Thyroid gland (tissue), 4 donors: ENCODE measurements at regions of chr3 and their contacts with region 1.

Region 1: DNA sequence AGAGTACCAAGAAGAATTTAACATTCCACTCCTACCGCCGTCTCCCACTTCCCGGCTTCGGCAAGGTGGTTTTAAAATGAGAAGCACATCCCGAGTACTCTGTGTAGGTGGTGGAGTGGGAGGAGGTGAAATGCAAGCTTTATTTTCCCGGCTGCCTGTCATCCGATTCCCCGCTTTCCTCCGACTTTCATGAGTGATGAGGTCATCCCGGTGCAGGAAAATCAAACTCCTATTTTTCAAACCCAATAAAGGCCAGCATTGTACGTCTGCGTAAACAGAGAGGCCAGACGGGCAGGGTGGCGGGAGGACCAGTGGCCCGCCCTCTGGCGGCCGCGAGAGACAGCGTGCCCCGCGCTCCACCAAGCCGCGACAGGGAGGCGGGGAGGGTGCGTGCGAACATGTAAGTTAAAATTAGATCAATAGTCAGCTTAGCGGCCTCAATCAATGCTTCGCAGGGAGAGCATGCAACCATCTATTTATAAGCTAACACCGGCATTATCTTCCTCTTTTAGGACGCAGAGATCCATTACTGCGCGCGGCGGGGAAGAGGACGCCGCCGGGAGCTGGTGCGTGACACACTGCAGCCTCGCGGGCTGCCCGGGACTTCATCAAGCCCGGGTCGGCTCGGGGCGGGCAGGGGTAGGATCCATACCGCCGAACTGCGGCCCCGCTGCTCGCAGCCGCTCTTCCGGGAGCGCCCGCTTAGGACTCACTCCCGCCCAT is 163.3 kb downstream of the CD47 start:
- DNase-seq: peak; percentile 72
- H3K4me3 ChIP-seq: peak overlapping the region in 2 of 3 donors; percentile 36 to 70
- H3K27ac ChIP-seq: no peak overlapping the region
- H3K4me1 ChIP-seq: peaks cover 0 to 10% of the 10 kb centered on the region in 2 donors
- H3K27me3 ChIP-seq: no peaks in the 10 kb centered on the region
- CTCF ChIP-seq: peak; percentile 66 to 90 (median 80)
- POLR2A ChIP-seq: no peak

Region 2: GRCh38 chr3:107627962-107628542 is 299.5 kb before region 1 on chr3:
- intact Hi-C with region 1: no loop called
- DNase-seq: no peak
- H3K4me3 ChIP-seq: no peak overlapping the region
- H3K27ac ChIP-seq: no peak overlapping the region
- H3K4me1 ChIP-seq: no peaks in the 10 kb centered on the region
- H3K27me3 ChIP-seq: no peaks in the 10 kb centered on the region
- CTCF ChIP-seq: no peak
- POLR2A ChIP-seq: no peak

Region 3: DNA sequence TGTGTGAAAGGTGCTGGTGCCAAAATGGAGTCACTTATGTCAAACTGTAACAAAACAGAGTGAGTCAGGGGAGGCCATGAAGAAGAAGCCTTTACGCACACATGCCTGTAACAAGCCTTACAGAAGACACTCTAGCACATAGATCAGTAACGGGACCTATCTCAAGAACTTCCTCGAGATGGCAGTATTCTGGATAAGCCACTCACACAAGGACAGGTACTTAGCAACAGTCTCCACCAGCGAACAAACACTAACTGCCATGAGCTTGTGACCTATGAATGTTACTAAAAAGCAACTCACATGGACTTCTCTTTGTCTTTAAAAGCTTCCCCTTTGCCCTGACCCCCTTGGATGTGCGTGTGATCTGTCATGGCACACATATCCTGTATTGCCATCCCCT is 71.8 kb before region 1 on chr3:
- intact Hi-C with region 1: loop called (anchors 5 kb)
- DNase-seq: peak in 1 of 2 donors; percentile 7
- H3K4me3 ChIP-seq: no peak overlapping the region
- H3K27ac ChIP-seq: no peak overlapping the region
- H3K4me1 ChIP-seq: no peaks in the 10 kb centered on the region
- H3K27me3 ChIP-seq: no peaks in the 10 kb centered on the region
- CTCF ChIP-seq: peak in 3 of 6 experiments; percentile 27 to 45 (median 36)
- POLR2A ChIP-seq: no peak